Posterior vena cava (tissue), 2 donors: ENCODE measurements at regions of chr16 and their contacts with region 1.

Region 1: DNA sequence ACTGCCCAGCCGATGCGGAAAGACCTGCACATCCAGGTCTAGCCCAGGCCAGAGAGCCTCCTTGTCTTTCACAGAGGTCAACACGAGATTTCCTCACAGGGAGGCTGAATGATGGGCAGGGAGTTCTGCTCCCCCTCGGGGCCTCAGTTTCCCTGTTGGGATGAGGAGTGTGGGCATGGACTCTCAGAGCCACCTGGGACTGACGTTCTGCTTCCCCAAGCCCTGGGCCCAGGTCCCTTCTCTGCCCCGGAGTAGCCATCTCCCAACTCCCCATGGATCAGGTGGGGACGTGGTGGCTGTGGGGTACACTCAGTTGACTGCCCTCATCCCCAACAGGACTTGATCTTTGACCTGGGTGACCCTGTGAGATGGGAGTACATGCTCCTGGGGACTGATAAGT is 17.6 kb upstream of the KATNB1 start:
- DNase-seq: peak; percentile 47

Region 2: GRCh38 chr16:57424583-57424982 is 293.4 kb before region 1 on chr16:
- intact Hi-C with region 1: no loop called
- DNase-seq: no peak

Region 3: GRCh38 chr16:58160855-58161254 is 442.8 kb after region 1 on chr16:
- intact Hi-C with region 1: loop called in 1 of 2 experiments (anchors 5 kb)
- DNase-seq: no peak